ENCODE measurements at regions of chr15 and their contacts with region 1.

Region 1: GRCh38 chr15:53987480-53987879 is 9.2 kb downstream of the UNC13C start:
- H3K4me3 Mint-ChIP-seq: no peak overlapping the region
- H3K27ac Mint-ChIP-seq: no peak overlapping the region
- H3K4me1 Mint-ChIP-seq: no peaks in the 10 kb centered on the region
- H3K27me3 Mint-ChIP-seq: peaks cover 2% of the 10 kb centered on the region

Region 2: GRCh38 chr15:53843869-53844569 is 143.5 kb before region 1 on chr15:
- intact Hi-C with region 1: no loop called
- H3K4me3 Mint-ChIP-seq: no peak overlapping the region
- H3K27ac Mint-ChIP-seq: no peak overlapping the region
- H3K4me1 Mint-ChIP-seq: peaks cover 6% of the 10 kb centered on the region
- H3K27me3 Mint-ChIP-seq: no peaks in the 10 kb centered on the region

Region 3: DNA sequence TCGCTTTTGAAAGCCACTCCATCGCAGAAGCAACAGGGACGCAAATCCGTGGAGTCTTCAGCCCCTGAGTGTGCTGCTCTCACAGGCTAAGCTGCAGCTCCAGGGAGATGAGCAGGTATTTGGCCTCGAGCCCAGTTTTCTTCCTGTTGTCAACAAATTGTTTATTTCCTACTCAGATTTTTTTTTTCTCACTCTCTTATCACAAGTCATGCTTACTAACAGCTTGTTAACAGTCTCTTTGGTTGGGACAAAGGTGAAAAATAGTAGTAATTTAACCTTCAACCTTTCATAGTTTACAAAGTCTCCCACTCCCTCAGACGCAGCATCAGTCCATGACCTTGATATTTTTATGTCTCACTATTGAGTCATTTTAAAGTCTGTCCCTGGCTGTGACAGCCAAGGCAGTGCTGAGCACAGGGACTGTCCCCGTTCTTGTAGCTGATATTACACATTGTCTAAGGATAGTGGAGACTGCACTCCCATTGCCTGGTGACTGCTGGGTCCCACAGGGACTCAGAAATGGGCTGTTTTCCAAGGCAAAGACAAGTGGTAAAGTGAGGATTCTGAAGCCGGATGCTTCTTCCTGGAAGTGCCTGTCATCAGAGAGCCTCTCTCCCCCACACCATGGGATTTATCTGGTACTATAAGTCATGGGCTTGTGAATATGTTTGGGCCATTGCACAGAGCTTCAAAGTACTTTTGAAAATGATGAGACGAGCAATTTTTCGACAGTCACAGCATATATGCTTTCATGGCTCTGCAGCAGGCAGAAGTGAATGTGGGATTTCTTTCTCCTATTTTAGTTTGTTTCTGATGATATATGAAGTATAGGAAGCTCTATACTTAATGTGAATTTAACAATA is 69.1 kb before region 1 on chr15:
- intact Hi-C with region 1: no loop called
- H3K4me3 Mint-ChIP-seq: no peak overlapping the region
- H3K27ac Mint-ChIP-seq: no peak overlapping the region
- H3K4me1 Mint-ChIP-seq: no peaks in the 10 kb centered on the region
- H3K27me3 Mint-ChIP-seq: no peaks in the 10 kb centered on the region

Region 4: DNA sequence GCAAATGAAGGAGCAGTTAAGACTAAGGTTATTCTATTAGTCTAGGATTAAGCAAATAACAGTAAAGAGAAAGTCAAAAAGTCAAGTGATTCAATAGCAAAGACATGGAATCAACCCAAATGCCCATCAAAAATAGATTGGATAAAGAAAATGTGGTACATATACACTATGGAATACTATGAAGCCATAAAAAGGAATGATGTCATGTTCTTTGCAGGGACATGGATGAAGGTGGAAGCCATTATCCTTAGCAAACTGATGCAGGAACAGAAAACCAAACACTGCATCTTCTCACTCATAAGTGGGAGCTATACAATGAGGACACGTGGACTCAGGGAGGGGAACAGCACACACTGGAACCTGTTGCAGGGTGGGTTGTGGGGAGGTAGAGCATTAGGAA is 19.8 kb after region 1 on chr15:
- intact Hi-C with region 1: loop called (anchors 2 kb)
- H3K4me3 Mint-ChIP-seq: no peak overlapping the region
- H3K27ac Mint-ChIP-seq: no peak overlapping the region
- H3K4me1 Mint-ChIP-seq: no peaks in the 10 kb centered on the region
- H3K27me3 Mint-ChIP-seq: no peaks in the 10 kb centered on the region

Measured in dendritic cell treated with granulocyte-macrophage colony-stimulating factor and Interleukin-4, amounts not matched to agents 40 ng/mL and 50 ng/mL, for 4 days (primary cell).